ENCODE measurements at regions of chr2 and their contacts with region 1.

Region 1: GRCh38 chr2:152175458-152176325 is at the start of gene STAM2:
- DNase-seq: peak; percentile 93 to 97
- H3K4me3 ChIP-seq: peak within 1 kb of the TSS; percentile 84
- H3K4me3 Mint-ChIP-seq: peak within 1 kb of the TSS; percentile 97
- H3K27ac Mint-ChIP-seq: peak within 1 kb of the TSS; percentile 99
- H3K4me1 ChIP-seq: peaks cover 32% of the 10 kb centered on the region
- H3K4me1 Mint-ChIP-seq: peaks cover 33% of the 10 kb centered on the region
- H3K27me3 ChIP-seq: no peaks in the 10 kb centered on the region
- H3K27me3 Mint-ChIP-seq: no peaks in the 10 kb centered on the region
- CTCF ChIP-seq: peak; percentile 94 to 97
- total RNA-seq, gene STAM2: 20.3 and 24.4 TPM in 2 replicates

Region 2: GRCh38 chr2:152097801-152098495 is 77.7 kb before region 1 on chr2:
- CTCF ChIA-PET with region 1: interaction called, 3 read pairs
- POLR2A ChIA-PET with region 1: no interaction called
- intact Hi-C with region 1: loop called (anchors 5 kb)
- DNase-seq: peak in 1 of 2 experiments; percentile 32
- H3K4me3 ChIP-seq: peak overlapping the region; percentile 56
- H3K4me3 Mint-ChIP-seq: peak overlapping the region; percentile 74
- H3K27ac Mint-ChIP-seq: no peak overlapping the region
- H3K4me1 ChIP-seq: no peaks in the 10 kb centered on the region
- H3K4me1 Mint-ChIP-seq: peaks cover 14% of the 10 kb centered on the region
- H3K27me3 ChIP-seq: peaks cover 4% of the 10 kb centered on the region; the same call in 1 of the 2 replicates
- H3K27me3 Mint-ChIP-seq: peaks cover 16% of the 10 kb centered on the region
- CTCF ChIP-seq: no peak

Region 3: GRCh38 chr2:152335010-152335725 is 159.5 kb after region 1 on chr2 and contains the start of gene FMNL2:
- CTCF ChIA-PET with region 1: no interaction called
- POLR2A ChIA-PET with region 1: no interaction called
- intact Hi-C with region 1: loop called (anchors 5 kb)
- DNase-seq: peak; percentile 89 to 94
- H3K4me3 ChIP-seq: peak within 1 kb of the TSS; percentile 79
- H3K4me3 Mint-ChIP-seq: peak within 1 kb of the TSS; percentile 84
- H3K27ac Mint-ChIP-seq: peak within 1 kb of the TSS; percentile 76
- H3K4me1 ChIP-seq: peaks cover 12% of the 10 kb centered on the region
- H3K4me1 Mint-ChIP-seq: peaks cover 13% of the 10 kb centered on the region
- H3K27me3 ChIP-seq: no peaks in the 10 kb centered on the region
- H3K27me3 Mint-ChIP-seq: no peaks in the 10 kb centered on the region
- CTCF ChIP-seq: no peak
- total RNA-seq, gene FMNL2: 38.0 and 38.2 TPM in 2 replicates

Region 4: GRCh38 chr2:152558158-152558984 is 382.7 kb after region 1 on chr2:
- CTCF ChIA-PET with region 1: no interaction called
- POLR2A ChIA-PET with region 1: no interaction called
- intact Hi-C with region 1: loop called (anchors 1 kb)
- DNase-seq: no peak
- H3K4me3 ChIP-seq: no peak overlapping the region
- H3K4me3 Mint-ChIP-seq: no peak overlapping the region
- H3K27ac Mint-ChIP-seq: no peak overlapping the region
- H3K4me1 ChIP-seq: no peaks in the 10 kb centered on the region
- H3K4me1 Mint-ChIP-seq: no peaks in the 10 kb centered on the region
- H3K27me3 ChIP-seq: no peaks in the 10 kb centered on the region
- H3K27me3 Mint-ChIP-seq: no peaks in the 10 kb centered on the region
- CTCF ChIP-seq: no peak

Region 5: DNA sequence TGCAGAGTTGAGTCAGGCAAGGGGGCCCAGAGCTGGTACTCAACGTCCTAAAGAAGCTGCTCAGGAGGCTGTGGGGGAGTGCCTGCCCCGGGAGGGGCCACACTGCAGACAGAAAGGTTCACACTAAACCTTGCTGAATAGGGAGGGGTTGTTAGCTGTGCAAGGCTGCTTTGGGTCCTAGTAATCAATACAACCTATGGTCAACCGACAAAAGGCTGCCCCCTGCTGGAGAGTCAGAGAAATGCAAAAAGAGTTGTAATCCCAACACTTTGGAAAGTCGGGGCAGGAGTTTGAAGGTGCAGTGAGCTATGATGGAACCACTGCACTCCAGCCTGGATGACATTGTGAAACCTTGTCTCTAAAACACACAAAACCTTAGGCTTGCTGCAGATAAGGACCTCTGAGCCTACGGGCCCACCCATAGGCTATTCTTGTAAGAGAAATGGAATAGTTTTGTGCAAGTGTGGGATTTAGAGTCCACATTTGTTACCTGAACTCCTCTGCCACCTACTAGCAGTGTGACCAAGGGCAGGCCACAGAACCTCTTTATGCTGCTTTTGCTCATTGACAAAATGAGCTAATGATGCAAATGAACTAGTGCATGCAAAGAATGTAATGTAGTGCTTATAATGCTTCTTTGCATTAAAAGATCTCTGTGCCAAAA is 460.1 kb after region 1 on chr2:
- CTCF ChIA-PET with region 1: interaction called, 17 read pairs
- POLR2A ChIA-PET with region 1: interaction called, 3 read pairs
- intact Hi-C with region 1: loop called (anchors 1 kb)
- DNase-seq: peak; percentile 68 to 75
- H3K4me3 ChIP-seq: no peak overlapping the region
- H3K4me3 Mint-ChIP-seq: no peak overlapping the region
- H3K27ac Mint-ChIP-seq: no peak overlapping the region
- H3K4me1 ChIP-seq: no peaks in the 10 kb centered on the region
- H3K4me1 Mint-ChIP-seq: no peaks in the 10 kb centered on the region
- H3K27me3 ChIP-seq: no peaks in the 10 kb centered on the region
- H3K27me3 Mint-ChIP-seq: no peaks in the 10 kb centered on the region
- CTCF ChIP-seq: peak; percentile 71 to 82

Region 6: DNA sequence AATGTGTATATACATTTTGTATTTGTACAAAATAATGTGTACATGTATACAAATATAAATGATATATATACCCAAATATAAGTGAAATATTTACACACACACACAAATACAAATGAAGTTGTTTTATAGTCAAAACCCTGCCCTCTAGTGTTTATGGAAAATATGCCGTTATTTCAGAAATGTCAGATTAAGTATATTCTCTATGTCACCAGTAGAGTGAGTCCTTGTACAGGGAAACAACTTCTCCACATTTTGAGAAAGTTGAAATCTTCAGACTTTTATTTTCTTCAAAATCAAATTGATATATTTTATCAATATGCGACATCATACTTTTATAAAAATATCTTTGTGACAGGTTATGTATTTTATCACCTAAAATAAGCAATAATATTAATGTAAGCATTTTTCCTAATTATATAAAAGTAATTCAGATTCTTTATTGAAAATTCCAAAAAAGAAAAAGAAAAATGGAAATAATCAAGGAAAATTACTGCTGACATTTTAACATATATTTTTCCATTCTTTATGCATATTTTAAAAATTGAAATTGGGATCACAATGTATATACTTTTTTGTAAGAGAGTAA is 565.1 kb after region 1 on chr2:
- CTCF ChIA-PET with region 1: no interaction called
- POLR2A ChIA-PET with region 1: no interaction called
- intact Hi-C with region 1: loop called (anchors 5 kb)
- DNase-seq: peak in 1 of 2 experiments; percentile 42
- H3K4me3 ChIP-seq: no peak overlapping the region
- H3K4me3 Mint-ChIP-seq: no peak overlapping the region
- H3K27ac Mint-ChIP-seq: no peak overlapping the region
- H3K4me1 ChIP-seq: no peaks in the 10 kb centered on the region
- H3K4me1 Mint-ChIP-seq: no peaks in the 10 kb centered on the region
- H3K27me3 ChIP-seq: no peaks in the 10 kb centered on the region
- H3K27me3 Mint-ChIP-seq: no peaks in the 10 kb centered on the region
- CTCF ChIP-seq: peak; percentile 80 to 89